HepG2 (cell line): ENCODE measurements at regions of chr2 and their contacts with region 1.

Region 1: DNA sequence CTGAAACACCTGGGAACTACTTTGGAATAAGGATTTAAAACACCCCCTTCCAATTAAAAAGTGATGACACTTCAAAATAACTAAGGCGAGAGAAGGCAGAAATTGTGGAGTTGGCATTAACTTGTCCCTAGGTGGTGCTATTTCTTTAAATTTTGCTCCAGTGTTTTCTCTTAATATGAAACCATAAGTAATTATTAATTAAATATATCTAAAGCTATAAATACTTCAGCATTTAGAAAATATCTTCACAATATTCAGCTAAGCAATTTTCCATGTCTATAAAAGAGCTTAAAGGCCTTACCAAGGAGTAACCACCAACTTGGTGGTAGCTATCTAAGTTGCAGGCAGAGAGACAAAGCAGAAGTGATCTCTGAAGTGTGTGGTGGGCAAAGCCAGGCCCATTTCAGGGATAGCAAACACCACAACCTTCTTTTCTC is 186.8 kb upstream of the PGAP1 start:
- DNase-seq: peak; percentile 12
- ATAC-seq: peak; percentile 53; the same call in 2 of the 3 replicates
- H3K4me3 ChIP-seq: no peak overlapping the region
- H3K27ac ChIP-seq: no peak overlapping the region
- H3K4me1 ChIP-seq: no peaks in the 10 kb centered on the region
- H3K27me3 ChIP-seq: peaks cover 0 to 4% of the 10 kb centered on the region in 2 experiments; a peak in 1 of 5 replicates
- CTCF ChIP-seq: peak; percentile 58
- EP300 ChIP-seq: no peak
- POLR2A ChIP-seq: no peak
- RAD21 ChIP-seq: peak; percentile 37; the same call in 1 of the 2 replicates

Region 2: DNA sequence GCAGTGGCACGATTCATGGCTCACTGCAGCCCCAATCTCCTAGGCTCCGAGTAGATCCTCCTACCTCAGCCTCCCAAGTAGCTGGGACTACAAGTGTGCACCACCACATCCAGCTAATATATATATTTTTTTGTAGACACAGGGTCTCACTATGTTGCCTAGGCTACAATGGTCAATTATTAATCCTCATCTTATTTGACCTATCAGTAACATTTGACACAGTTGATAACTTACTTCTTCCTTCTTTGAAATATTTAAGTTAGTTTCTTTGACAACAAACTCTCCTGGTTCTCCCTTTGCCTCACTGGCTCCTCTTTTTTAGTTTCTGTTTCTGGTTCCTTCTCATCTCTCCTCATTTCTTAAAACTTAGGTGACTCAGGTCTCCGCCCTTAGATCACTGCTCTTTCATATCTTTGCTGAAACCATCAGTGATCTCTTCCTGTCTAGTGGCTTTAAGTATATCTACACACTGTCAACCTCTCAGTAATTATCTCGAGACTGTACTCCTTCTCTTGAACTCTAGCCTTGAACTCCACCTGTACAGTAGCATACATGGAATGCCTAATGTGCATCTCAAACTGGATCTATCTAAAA is 198.3 kb before region 1 on chr2:
- CTCF ChIA-PET with region 1: no interaction called
- POLR2A ChIA-PET with region 1: no interaction called
- in situ Hi-C with region 1: no loop called
- intact Hi-C with region 1: no loop called
- DNase-seq: no peak
- ATAC-seq: no peak
- H3K4me3 ChIP-seq: no peak overlapping the region
- H3K27ac ChIP-seq: no peak overlapping the region
- H3K4me1 ChIP-seq: no peaks in the 10 kb centered on the region
- H3K27me3 ChIP-seq: no peaks in the 10 kb centered on the region
- CTCF ChIP-seq: no peak
- EP300 ChIP-seq: no peak
- POLR2A ChIP-seq: no peak
- RAD21 ChIP-seq: no peak

Region 3: DNA sequence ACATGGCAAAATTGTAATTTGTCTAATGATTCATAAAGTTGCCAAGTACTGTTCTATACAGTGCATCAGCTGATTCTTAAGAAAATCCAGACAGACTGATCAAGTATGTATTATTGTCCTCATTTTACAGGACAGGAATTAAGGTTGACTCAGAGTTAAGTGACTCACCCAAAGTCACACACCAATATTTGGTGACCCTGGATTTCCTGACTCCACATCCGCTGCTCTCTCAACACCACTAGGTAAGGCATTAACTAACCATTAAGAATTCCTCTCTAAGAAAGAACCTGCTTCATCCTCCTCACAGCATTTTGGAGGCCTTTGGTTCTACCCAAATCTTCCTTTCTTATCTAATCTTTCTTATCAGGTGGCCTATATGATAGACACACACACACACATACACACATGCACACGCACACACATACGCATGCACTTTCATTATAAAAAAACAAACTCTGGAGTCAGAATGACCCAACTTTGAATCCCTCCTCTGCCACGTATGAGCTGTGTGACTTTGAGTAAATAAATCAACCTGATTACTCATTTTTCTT is 46.4 kb after region 1 on chr2:
- CTCF ChIA-PET with region 1: no interaction called
- POLR2A ChIA-PET with region 1: no interaction called
- in situ Hi-C with region 1: loop called (anchors 5 kb)
- intact Hi-C with region 1: no loop called
- DNase-seq: peak; percentile 67
- ATAC-seq: peak; percentile 69
- H3K4me3 ChIP-seq: no peak overlapping the region
- H3K27ac ChIP-seq: no peak overlapping the region
- H3K4me1 ChIP-seq: peaks cover 37% of the 10 kb centered on the region
- H3K27me3 ChIP-seq: peaks cover 0 to 4% of the 10 kb centered on the region in 2 experiments; a peak in 2 of 5 replicates
- CTCF ChIP-seq: no peak
- EP300 ChIP-seq: no peak
- POLR2A ChIP-seq: no peak
- RAD21 ChIP-seq: no peak

Region 4: DNA sequence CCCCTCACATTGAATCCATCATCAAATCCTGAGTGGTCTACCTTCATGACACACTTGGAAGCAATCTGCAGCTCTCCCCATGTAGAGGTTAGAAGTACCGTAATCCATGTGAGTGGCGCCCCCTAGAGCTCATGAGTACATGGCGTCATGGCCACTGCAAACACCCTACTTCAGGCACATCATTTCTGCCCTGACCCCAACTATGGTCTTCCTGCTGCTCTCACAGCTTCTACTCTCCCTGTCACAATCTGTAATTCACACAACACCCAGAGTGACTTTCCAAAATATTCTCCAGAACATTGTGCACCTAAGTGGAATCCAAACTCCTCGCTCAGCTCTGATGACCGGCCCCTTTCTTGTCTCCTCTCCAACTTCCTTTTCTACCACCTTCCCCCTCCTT is 55.4 kb after region 1 on chr2:
- CTCF ChIA-PET with region 1: interaction called, 15 read pairs
- POLR2A ChIA-PET with region 1: no interaction called
- in situ Hi-C with region 1: loop called (anchors 5 kb)
- intact Hi-C with region 1: loop called (anchors 2 kb)
- DNase-seq: peak; percentile 65
- ATAC-seq: peak; percentile 99
- H3K4me3 ChIP-seq: no peak overlapping the region
- H3K27ac ChIP-seq: no peak overlapping the region
- H3K4me1 ChIP-seq: no peaks in the 10 kb centered on the region
- H3K27me3 ChIP-seq: peaks cover 0 to 1% of the 10 kb centered on the region in 2 experiments; a peak in 1 of 5 replicates
- CTCF ChIP-seq: peak; percentile 82
- EP300 ChIP-seq: no peak
- POLR2A ChIP-seq: no peak
- RAD21 ChIP-seq: peak; percentile 75

Region 5: GRCh38 chr2:197360744-197361156 is 247.5 kb after region 1 on chr2:
- CTCF ChIA-PET with region 1: no interaction called
- POLR2A ChIA-PET with region 1: no interaction called
- in situ Hi-C with region 1: loop called (anchors 10 kb)
- intact Hi-C with region 1: no loop called
- DNase-seq: no peak
- ATAC-seq: no peak
- H3K4me3 ChIP-seq: no peak overlapping the region
- H3K27ac ChIP-seq: no peak overlapping the region
- H3K4me1 ChIP-seq: no peaks in the 10 kb centered on the region
- H3K27me3 ChIP-seq: peaks cover 0 to 4% of the 10 kb centered on the region in 2 experiments; a peak in 1 of 5 replicates
- CTCF ChIP-seq: no peak
- EP300 ChIP-seq: no peak
- POLR2A ChIP-seq: no peak
- RAD21 ChIP-seq: no peak